BJ (cell line): ENCODE measurements at regions of chr2 and their contacts with region 1.

Region 1: DNA sequence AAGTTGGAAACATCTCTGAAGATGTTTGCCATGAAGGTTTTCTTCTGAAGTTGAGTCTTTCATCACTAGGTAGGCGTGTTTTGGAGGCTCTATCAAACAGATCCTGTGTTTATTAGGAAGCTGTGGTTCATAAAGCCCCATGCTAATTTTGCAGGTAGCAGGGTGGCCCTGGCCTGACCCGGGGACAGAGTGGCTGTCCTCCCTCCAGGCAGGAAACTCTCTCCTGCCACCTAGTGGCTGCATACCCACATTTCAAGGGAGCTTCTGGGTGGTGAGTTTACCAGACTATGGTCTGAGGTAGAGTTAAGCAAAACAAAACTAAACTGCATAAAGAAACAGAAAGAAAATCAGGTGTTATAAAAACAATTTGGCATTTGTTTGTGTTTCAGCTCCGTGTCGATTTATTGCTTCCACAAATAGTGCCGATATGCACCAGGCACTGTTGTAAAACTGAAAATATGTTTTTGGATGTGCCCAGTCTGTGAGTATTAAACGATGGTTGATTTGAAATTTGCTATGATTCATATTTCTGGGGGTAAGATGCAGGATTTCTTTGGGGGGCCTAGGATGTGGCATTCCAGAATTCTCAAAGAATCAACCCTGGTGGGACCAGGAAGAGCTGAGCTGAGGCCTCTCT is 26.0 kb upstream of the IL37 start:
- DNase-seq: no peak
- H3K4me3 ChIP-seq: no peak overlapping the region
- H3K27me3 ChIP-seq: no peaks in the 10 kb centered on the region
- CTCF ChIP-seq: peak; percentile 69

Region 2: DNA sequence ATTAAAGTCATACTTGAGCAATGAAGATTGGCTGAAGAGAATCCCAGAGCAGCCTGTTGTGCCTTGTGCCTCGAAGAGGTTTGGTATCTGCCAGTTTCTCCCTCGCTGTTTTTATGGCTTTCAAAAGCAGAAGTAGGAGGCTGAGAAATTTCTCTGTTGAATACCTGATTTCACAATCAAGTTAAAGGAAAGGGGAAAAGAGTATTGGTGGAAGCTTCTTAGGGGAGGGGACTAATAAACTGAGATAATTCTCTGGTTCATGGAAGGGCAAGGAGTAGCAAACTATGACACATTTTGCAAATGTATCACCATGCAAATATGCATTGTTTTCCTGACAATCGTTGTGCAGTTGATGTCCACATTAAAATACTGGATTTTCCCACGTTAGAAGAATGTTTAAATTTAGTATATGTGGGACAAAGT is 48.3 kb before region 1 on chr2 and contains the start of gene IL1B:
- CTCF ChIA-PET with region 1: interaction called, 12 read pairs
- POLR2A ChIA-PET with region 1: no interaction called
- DNase-seq: peak; percentile 75
- H3K4me3 ChIP-seq: peak within 1 kb of the TSS; percentile 16; the same call in 1 of the 2 replicates
- H3K27me3 ChIP-seq: no peaks in the 10 kb centered on the region
- CTCF ChIP-seq: no peak
- polyA plus RNA-seq, gene IL1B: 7.6 and 8.4 TPM in 2 replicates

Region 3: GRCh38 chr2:113351375-113352355 is 466.7 kb after region 1 on chr2:
- CTCF ChIA-PET with region 1: no interaction called
- POLR2A ChIA-PET with region 1: no interaction called
- DNase-seq: no peak
- H3K4me3 ChIP-seq: no peak overlapping the region
- H3K27me3 ChIP-seq: no peaks in the 10 kb centered on the region; the same call in 1 of the 2 replicates
- CTCF ChIP-seq: no peak